MCF 10A (cell line): ENCODE measurements at regions of chr19 and their contacts with region 1.

Region 1: GRCh38 chr19:9205501-9206113 is 13.8 kb downstream of the OR7D4 start:
- DNase-seq: peak; percentile 60
- H3K4me3 Mint-ChIP-seq: peak overlapping the region; percentile 52
- H3K27ac Mint-ChIP-seq: no peak overlapping the region
- H3K4me1 Mint-ChIP-seq: no peaks in the 10 kb centered on the region
- H3K27me3 Mint-ChIP-seq: no peaks in the 10 kb centered on the region
- CTCF ChIP-seq: peak; percentile 91

Region 2: GRCh38 chr19:8910775-8911414 is 294.7 kb before region 1 on chr19:
- CTCF ChIA-PET with region 1: no interaction called
- POLR2A ChIA-PET with region 1: no interaction called
- intact Hi-C with region 1: no loop called
- DNase-seq: no peak
- H3K4me3 Mint-ChIP-seq: no peak overlapping the region
- H3K27ac Mint-ChIP-seq: no peak overlapping the region
- H3K4me1 Mint-ChIP-seq: no peaks in the 10 kb centered on the region
- H3K27me3 Mint-ChIP-seq: no peaks in the 10 kb centered on the region
- CTCF ChIP-seq: no peak

Region 3: DNA sequence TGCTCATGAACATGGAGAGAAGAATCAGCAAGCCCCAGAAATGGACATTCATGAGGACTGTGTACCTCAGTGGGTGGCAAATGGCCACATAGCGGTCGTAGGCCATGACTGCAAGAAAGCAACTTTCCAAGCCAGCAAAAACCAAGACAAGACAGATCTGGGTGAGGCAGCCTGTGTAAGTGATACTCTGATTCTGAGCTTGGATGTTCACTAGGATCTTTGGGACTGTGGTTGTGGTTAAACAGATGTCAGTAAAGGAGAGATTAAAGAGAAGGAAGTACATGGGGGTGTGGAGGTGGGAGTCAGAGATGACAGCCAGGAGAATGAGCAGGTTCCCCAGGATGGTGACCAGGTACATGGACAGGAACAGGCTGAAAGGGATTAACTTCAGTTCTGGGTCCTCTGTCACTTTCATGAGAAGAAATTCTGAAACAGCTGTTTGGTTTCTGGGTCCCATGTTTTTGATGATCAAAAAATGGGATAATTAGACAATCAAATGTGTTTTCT is 90.2 kb before region 1 on chr19 and contains the start of gene OR7G1:
- CTCF ChIA-PET with region 1: no interaction called
- POLR2A ChIA-PET with region 1: no interaction called
- intact Hi-C with region 1: no loop called
- DNase-seq: no peak
- H3K4me3 Mint-ChIP-seq: no peak within 1 kb of the TSS
- H3K27ac Mint-ChIP-seq: no peak within 1 kb of the TSS
- H3K4me1 Mint-ChIP-seq: no peaks in the 10 kb centered on the region
- H3K27me3 Mint-ChIP-seq: no peaks in the 10 kb centered on the region
- CTCF ChIP-seq: no peak
- total RNA-seq, gene OR7G1: not detected in 2 replicates

Region 4: DNA sequence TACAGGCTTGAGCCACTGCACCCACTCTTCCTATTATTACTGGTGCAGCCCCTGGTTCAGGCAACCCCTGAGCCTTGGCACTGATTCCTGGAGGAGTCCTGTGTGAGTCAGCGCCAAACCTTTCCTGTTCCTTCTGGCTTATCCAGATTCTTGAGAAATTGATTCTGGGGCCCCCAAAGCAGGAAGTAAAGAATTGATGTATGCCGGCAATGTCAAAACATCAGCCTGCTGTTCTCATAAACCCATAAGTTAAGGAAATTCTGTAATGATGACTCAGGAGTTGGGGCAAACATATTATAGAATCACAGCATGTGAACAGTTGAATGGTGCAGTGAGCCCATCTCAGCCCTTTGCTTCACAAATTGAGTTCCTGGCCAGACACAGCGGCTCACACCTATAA is 77.4 kb before region 1 on chr19:
- CTCF ChIA-PET with region 1: no interaction called
- POLR2A ChIA-PET with region 1: no interaction called
- intact Hi-C with region 1: no loop called
- DNase-seq: peak; percentile 52
- H3K4me3 Mint-ChIP-seq: no peak overlapping the region
- H3K27ac Mint-ChIP-seq: no peak overlapping the region
- H3K4me1 Mint-ChIP-seq: no peaks in the 10 kb centered on the region
- H3K27me3 Mint-ChIP-seq: no peaks in the 10 kb centered on the region
- CTCF ChIP-seq: no peak

Region 5: DNA sequence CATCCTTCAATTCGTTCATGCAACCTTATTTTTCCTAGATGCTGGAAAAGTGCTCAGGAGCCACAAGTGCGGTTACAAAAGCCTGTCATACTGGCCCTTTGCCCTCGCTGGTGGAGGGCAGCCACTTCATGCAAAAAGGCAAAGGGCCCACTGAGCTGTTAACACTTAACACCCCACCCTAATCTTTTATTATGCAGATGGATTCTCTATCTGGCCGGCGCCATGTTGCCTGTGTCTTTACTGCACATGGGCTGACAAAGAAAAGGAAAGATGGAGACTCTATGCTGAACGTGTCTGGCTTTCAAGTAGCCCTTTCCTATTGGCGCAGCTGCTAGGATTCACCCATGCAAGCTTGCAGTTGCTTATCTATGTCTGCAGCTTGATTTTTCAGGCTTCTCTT is 16.1 kb before region 1 on chr19:
- CTCF ChIA-PET with region 1: interaction called, 10 read pairs
- POLR2A ChIA-PET with region 1: interaction called, 3 read pairs
- intact Hi-C with region 1: no loop called
- DNase-seq: no peak
- H3K4me3 Mint-ChIP-seq: no peak overlapping the region
- H3K27ac Mint-ChIP-seq: no peak overlapping the region
- H3K4me1 Mint-ChIP-seq: no peaks in the 10 kb centered on the region
- H3K27me3 Mint-ChIP-seq: no peaks in the 10 kb centered on the region
- CTCF ChIP-seq: no peak

Region 6: GRCh38 chr19:9219489-9219888 is 13.9 kb after region 1 on chr19 and contains the start of gene OR7D4:
- CTCF ChIA-PET with region 1: interaction called, 12 read pairs
- POLR2A ChIA-PET with region 1: no interaction called
- intact Hi-C with region 1: no loop called
- DNase-seq: no peak
- H3K4me3 Mint-ChIP-seq: no peak within 1 kb of the TSS
- H3K27ac Mint-ChIP-seq: no peak within 1 kb of the TSS
- H3K4me1 Mint-ChIP-seq: no peaks in the 10 kb centered on the region
- H3K27me3 Mint-ChIP-seq: no peaks in the 10 kb centered on the region
- CTCF ChIP-seq: no peak
- total RNA-seq, gene OR7D4: not detected in 2 replicates

Region 7: GRCh38 chr19:9295411-9295849 is 89.8 kb after region 1 on chr19:
- CTCF ChIA-PET with region 1: interaction called, 15 read pairs
- POLR2A ChIA-PET with region 1: no interaction called
- intact Hi-C with region 1: no loop called
- DNase-seq: no peak
- H3K4me3 Mint-ChIP-seq: no peak overlapping the region
- H3K27ac Mint-ChIP-seq: no peak overlapping the region
- H3K4me1 Mint-ChIP-seq: no peaks in the 10 kb centered on the region
- H3K27me3 Mint-ChIP-seq: no peaks in the 10 kb centered on the region
- CTCF ChIP-seq: no peak

Region 8: GRCh38 chr19:9435279-9436268 is 230.0 kb after region 1 on chr19 and contains the start of gene ZNF266:
- CTCF ChIA-PET with region 1: interaction called, 10 read pairs
- POLR2A ChIA-PET with region 1: no interaction called
- intact Hi-C with region 1: no loop called
- DNase-seq: peak; percentile 89
- H3K4me3 Mint-ChIP-seq: peak within 1 kb of the TSS; percentile 88
- H3K27ac Mint-ChIP-seq: peak within 1 kb of the TSS; percentile 98
- H3K4me1 Mint-ChIP-seq: peaks cover 9% of the 10 kb centered on the region
- H3K27me3 Mint-ChIP-seq: no peaks in the 10 kb centered on the region
- CTCF ChIP-seq: peak; percentile 72
- total RNA-seq, gene ZNF266: 17.0 and 23.7 TPM in 2 replicates

Region 9: GRCh38 chr19:9456018-9456689 is 250.5 kb after region 1 on chr19:
- CTCF ChIA-PET with region 1: interaction called, 11 read pairs
- POLR2A ChIA-PET with region 1: no interaction called
- intact Hi-C with region 1: loop called (anchors 5 kb)
- DNase-seq: no peak
- H3K4me3 Mint-ChIP-seq: peak overlapping the region; percentile 69
- H3K27ac Mint-ChIP-seq: peak overlapping the region; percentile 84
- H3K4me1 Mint-ChIP-seq: no peaks in the 10 kb centered on the region
- H3K27me3 Mint-ChIP-seq: no peaks in the 10 kb centered on the region
- CTCF ChIP-seq: no peak

Region 10: GRCh38 chr19:9796113-9796773 is 590.6 kb after region 1 on chr19:
- CTCF ChIA-PET with region 1: interaction called, 7 read pairs
- POLR2A ChIA-PET with region 1: no interaction called
- intact Hi-C with region 1: loop called (anchors 1 kb)
- DNase-seq: peak; percentile 94
- H3K4me3 Mint-ChIP-seq: no peak overlapping the region
- H3K27ac Mint-ChIP-seq: peak overlapping the region; percentile 59
- H3K4me1 Mint-ChIP-seq: peaks cover 6% of the 10 kb centered on the region
- H3K27me3 Mint-ChIP-seq: no peaks in the 10 kb centered on the region
- CTCF ChIP-seq: peak; percentile 67